ENCODE measurements at regions of chr7 and their contacts with region 1.

Region 1: GRCh38 chr7:100081535-100082102 is at the start of gene ZNF3:
- DNase-seq: peak in 1 of 2 donors; percentile 99
- H3K4me3 ChIP-seq: peak within 1 kb of the TSS; percentile 79 to 85
- H3K27ac ChIP-seq: peak within 1 kb of the TSS; percentile 71
- H3K4me1 ChIP-seq: peaks cover 39% of the 10 kb centered on the region
- H3K27me3 ChIP-seq: no peaks in the 10 kb centered on the region
- CTCF ChIP-seq: peak; percentile 65 to 97 (median 92)
- POLR2A ChIP-seq: peak in 1 of 2 donors; percentile 20
- total RNA-seq, gene ZNF3: 16.7 TPM

Region 2: DNA sequence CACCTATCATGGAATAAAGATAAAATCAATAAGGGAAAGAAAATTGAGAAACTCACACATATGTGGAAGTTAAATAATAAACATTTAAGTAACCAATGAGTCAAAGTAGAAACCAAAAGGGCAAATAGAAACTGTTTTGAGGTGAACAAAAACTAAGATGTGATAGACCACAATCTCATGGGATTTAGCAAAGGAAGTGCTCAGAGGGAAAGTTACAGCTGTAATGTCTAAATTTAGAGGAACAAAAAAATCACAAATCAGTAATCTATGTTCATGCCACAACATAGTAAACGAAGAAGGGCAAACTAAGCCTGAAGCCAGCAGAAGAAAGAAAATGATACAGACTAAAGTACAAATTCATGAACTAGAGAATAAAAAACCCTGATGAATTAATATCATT is 314.0 kb before region 1 on chr7:
- intact Hi-C with region 1: no loop called
- DNase-seq: no peak
- H3K4me3 ChIP-seq: no peak overlapping the region
- H3K27ac ChIP-seq: no peak overlapping the region
- H3K4me1 ChIP-seq: no peaks in the 10 kb centered on the region
- H3K27me3 ChIP-seq: no peaks in the 10 kb centered on the region
- CTCF ChIP-seq: no peak
- POLR2A ChIP-seq: no peak

Region 3: GRCh38 chr7:99990460-99990852 is 91.2 kb before region 1 on chr7:
- intact Hi-C with region 1: loop called (anchors 5 kb)
- DNase-seq: no peak
- H3K4me3 ChIP-seq: no peak overlapping the region
- H3K27ac ChIP-seq: no peak overlapping the region
- H3K4me1 ChIP-seq: peaks cover 21% of the 10 kb centered on the region
- H3K27me3 ChIP-seq: no peaks in the 10 kb centered on the region
- CTCF ChIP-seq: no peak
- POLR2A ChIP-seq: no peak

Measured in vagina (tissue), 2 donors.